ENCODE measurements at regions of chr15 and their contacts with region 1.

Region 1: GRCh38 chr15:79989682-79990081 is 18.7 kb upstream of the BCL2A1 start:
- DNase-seq: no peak
- H3K4me3 ChIP-seq: no peak overlapping the region
- H3K27ac ChIP-seq: no peak overlapping the region
- H3K4me1 ChIP-seq: peaks cover 0 to 4% (median 0%) of the 10 kb centered on the region in 4 donors
- H3K27me3 ChIP-seq: no peaks in the 10 kb centered on the region
- CTCF ChIP-seq: no peak
- EP300 ChIP-seq: no peak
- POLR2A ChIP-seq: no peak

Region 2: DNA sequence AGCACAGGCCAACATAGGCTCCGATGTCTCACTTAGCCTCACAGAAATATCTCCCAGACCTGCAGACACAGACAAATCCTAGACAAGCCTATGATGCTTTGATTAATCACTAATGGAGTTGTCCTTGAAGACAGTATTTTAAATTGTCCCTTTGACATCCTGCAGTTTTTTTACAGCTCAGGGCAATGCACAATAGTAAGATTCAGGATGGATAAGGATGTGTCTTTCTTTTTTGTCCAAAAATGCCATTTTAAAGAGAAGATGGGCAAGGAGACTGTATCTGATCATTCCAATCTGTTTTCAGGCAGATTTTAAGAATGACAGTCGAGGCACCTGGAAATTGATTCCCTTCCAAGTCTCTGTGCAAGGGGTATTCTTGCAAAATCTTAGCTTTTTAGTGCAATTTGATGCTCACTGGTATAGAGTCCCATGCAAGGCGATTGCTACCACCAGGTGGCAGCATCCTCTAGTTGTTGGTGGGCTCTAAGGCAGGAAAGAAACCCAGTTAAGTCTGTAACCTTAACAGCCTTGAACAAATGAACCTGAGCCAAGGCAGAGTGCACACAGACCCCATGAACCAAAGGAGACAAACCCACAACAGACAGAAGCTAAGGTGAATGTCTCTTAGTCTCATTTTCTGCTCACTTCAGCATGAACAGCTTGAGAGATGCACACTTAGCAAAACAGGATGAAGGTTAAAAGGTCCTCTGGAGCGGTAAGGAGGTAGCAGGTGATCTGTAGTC is 608.8 kb before region 1 on chr15:
- in situ Hi-C with region 1: no loop called
- intact Hi-C with region 1: loop called (anchors 5 kb)
- DNase-seq: peak; percentile 76
- H3K4me3 ChIP-seq: no peak overlapping the region
- H3K27ac ChIP-seq: no peak overlapping the region
- H3K4me1 ChIP-seq: peaks cover 0 to 3% (median 0%) of the 10 kb centered on the region in 4 donors
- H3K27me3 ChIP-seq: no peaks in the 10 kb centered on the region
- CTCF ChIP-seq: peak; percentile 78 to 89 (median 87)
- EP300 ChIP-seq: no peak
- POLR2A ChIP-seq: no peak

Region 3: DNA sequence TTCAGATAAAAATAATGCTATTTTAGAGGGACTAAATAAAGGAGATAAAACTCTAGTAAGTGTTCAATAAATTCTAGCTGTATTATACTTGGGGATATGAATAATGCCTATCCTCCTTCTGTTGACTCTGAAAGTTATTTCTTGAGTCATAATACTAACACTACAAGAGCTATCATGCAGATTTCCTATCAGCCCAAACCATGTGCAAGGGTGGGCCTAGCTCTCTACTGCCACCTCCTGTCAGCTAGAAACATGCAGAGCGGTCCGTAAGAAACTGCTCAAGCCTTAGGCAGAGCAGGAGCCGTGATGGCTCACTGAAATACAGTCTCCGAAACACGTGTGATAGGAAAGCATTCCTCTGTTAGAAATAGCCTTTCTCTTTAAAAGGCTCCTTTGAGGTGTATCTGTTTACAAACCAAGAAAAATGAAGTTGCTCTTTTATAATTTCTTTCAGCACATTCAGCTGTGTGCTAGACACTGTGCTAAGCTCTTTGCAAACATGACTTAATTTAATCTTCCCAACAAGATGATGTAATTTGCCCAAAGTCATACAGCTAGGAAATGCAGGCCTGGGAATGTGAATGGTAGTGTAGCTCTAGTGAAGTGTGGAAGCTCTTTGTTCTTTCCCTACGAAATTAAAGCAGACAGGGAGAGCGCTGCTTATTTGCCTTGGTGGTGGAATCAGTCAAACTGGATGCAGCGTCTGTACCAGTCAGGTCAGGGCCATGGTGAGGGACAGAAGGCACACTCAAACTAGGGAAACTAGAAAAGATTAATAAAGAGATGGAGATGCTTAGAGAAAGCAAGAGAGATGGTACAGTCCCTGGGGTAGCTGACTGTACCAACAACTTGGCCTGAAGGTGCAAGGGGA is 136.0 kb before region 1 on chr15:
- in situ Hi-C with region 1: loop called in 1 of 4 experiments (anchors 10 kb)
- intact Hi-C with region 1: no loop called
- DNase-seq: peak; percentile 60
- H3K4me3 ChIP-seq: no peak overlapping the region
- H3K27ac ChIP-seq: no peak overlapping the region
- H3K4me1 ChIP-seq: peaks cover 0 to 2% (median 0%) of the 10 kb centered on the region in 4 donors
- H3K27me3 ChIP-seq: no peaks in the 10 kb centered on the region
- CTCF ChIP-seq: peak; percentile 64 to 93 (median 89)
- EP300 ChIP-seq: no peak
- POLR2A ChIP-seq: no peak

Region 4: GRCh38 chr15:79896637-79897379 is 92.9 kb before region 1 on chr15 and contains the start of gene MTHFS:
- in situ Hi-C with region 1: no loop called
- intact Hi-C with region 1: loop called (anchors 10 kb)
- DNase-seq: peak; percentile 87
- H3K4me3 ChIP-seq: peak within 1 kb of the TSS; percentile 51 to 79 (median 63)
- H3K27ac ChIP-seq: peak within 1 kb of the TSS; percentile 90 to 95 (median 93)
- H3K4me1 ChIP-seq: peaks cover 0 to 17% (median 12%) of the 10 kb centered on the region in 4 donors
- H3K27me3 ChIP-seq: no peaks in the 10 kb centered on the region
- CTCF ChIP-seq: peak; percentile 30 to 52 (median 42)
- EP300 ChIP-seq: no peak
- POLR2A ChIP-seq: peak; percentile 82
- total RNA-seq, gene MTHFS: 22.1 to 28.7 (median 26.9) TPM in 3 of 4 donors, not detected in the other

Region 5: GRCh38 chr15:80173022-80173759 is 183.5 kb after region 1 on chr15:
- in situ Hi-C with region 1: loop called in 1 of 4 experiments (anchors 10 kb)
- intact Hi-C with region 1: no loop called
- DNase-seq: peak; percentile 75
- H3K4me3 ChIP-seq: no peak overlapping the region
- H3K27ac ChIP-seq: no peak overlapping the region
- H3K4me1 ChIP-seq: no peaks in the 10 kb centered on the region
- H3K27me3 ChIP-seq: no peaks in the 10 kb centered on the region
- CTCF ChIP-seq: peak; percentile 67 to 78 (median 70)
- EP300 ChIP-seq: no peak
- POLR2A ChIP-seq: no peak